ENCODE measurements at regions of chr10 and their contacts with region 1.

Region 1: GRCh38 chr10:102432162-102432950 is at the start of gene CUEDC2:
- DNase-seq: peak; percentile 96 to 98 (median 98)
- H3K4me3 ChIP-seq: peak within 1 kb of the TSS; percentile 56 to 98 (median 83)
- H3K27ac ChIP-seq: peak within 1 kb of the TSS; percentile 64 to 84
- H3K4me1 ChIP-seq: peaks cover 14 to 49% (median 48%) of the 10 kb centered on the region in 4 experiments
- H3K27me3 ChIP-seq: no peaks in the 10 kb centered on the region

Region 2: GRCh38 chr10:102450194-102450938 is 18.0 kb after region 1 on chr10:
- CTCF ChIA-PET with region 1: interaction called, 23 read pairs
- POLR2A ChIA-PET with region 1: interaction called, 4 read pairs
- DNase-seq: peak; percentile 88 to 94 (median 92)
- H3K4me3 ChIP-seq: peak overlapping the region; percentile 75 to 98 (median 87)
- H3K27ac ChIP-seq: peak overlapping the region; percentile 61 to 83
- H3K4me1 ChIP-seq: peaks cover 6 to 33% (median 21%) of the 10 kb centered on the region in 4 experiments
- H3K27me3 ChIP-seq: no peaks in the 10 kb centered on the region